Spleen (tissue), 13 donors: ENCODE measurements at regions of chr14 and their contacts with region 1.

Region 1: GRCh38 chr14:77654001-77654441 is 37.6 kb upstream of the SPTLC2 start:
- DNase-seq: no peak
- H3K4me3 ChIP-seq: no peak overlapping the region
- H3K27ac ChIP-seq: peak overlapping the region in 3 of 8 donors; percentile 15 to 78 (median 70)
- H3K4me1 ChIP-seq: peaks cover 0 to 59% (median 32%) of the 10 kb centered on the region in 6 donors
- H3K27me3 ChIP-seq: no peaks in the 10 kb centered on the region
- CTCF ChIP-seq: no peak
- POLR2A ChIP-seq: no peak

Region 2: DNA sequence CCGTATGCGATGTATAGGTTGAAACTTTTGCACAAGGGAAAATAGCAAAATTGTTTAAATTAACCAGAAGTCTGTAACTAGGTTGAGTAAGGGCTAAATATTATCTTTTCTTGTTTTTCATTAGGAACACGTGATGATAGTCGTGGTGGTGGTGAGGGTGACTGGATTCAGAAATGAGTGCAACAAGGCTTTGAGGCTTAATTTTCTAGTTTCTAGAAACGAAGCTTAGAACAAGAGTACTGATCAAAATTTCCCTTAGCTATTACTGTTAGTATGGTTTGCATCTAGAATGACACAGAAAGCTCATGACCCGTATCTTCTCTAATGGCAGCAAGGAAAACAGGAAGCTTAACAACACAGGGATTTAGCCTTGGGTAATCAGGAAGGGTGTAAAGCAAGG is 60.9 kb after region 1 on chr14:
- intact Hi-C with region 1: loop called (anchors 10 kb)
- DNase-seq: no peak
- H3K4me3 ChIP-seq: no peak overlapping the region
- H3K27ac ChIP-seq: peak overlapping the region in 7 of 8 donors; percentile 15 to 69 (median 51)
- H3K4me1 ChIP-seq: peaks cover under 1 to 39% (median 14%) of the 10 kb centered on the region in 6 donors
- H3K27me3 ChIP-seq: no peaks in the 10 kb centered on the region
- CTCF ChIP-seq: no peak
- POLR2A ChIP-seq: no peak

Region 3: GRCh38 chr14:77923131-77923936 is 269.3 kb after region 1 on chr14:
- intact Hi-C with region 1: no loop called
- DNase-seq: peak; percentile 43
- H3K4me3 ChIP-seq: no peak overlapping the region
- H3K27ac ChIP-seq: no peak overlapping the region
- H3K4me1 ChIP-seq: no peaks in the 10 kb centered on the region
- H3K27me3 ChIP-seq: no peaks in the 10 kb centered on the region
- CTCF ChIP-seq: no peak
- POLR2A ChIP-seq: no peak